Caki2 (cell line): ENCODE measurements at regions of chr5 and their contacts with region 1.

Region 1: GRCh38 chr5:172283020-172283861 is at the start of gene UBTD2:
- DNase-seq: peak; percentile 70
- total RNA-seq, gene UBTD2: 23.6 and 31.8 TPM in 2 replicates

Region 2: GRCh38 chr5:171927345-171927941 is 355.8 kb before region 1 on chr5:
- in situ Hi-C with region 1: loop called (anchors 25 kb)
- DNase-seq: no peak